ENCODE measurements at regions of chr20 and their contacts with region 1.

Region 1: GRCh38 chr20:37693635-37694626 is at the start of gene CTNNBL1:
- DNase-seq: peak; percentile 97 to 98 (median 98)
- H3K4me3 ChIP-seq: peak within 1 kb of the TSS in 3 of 4 donors; percentile 47 to 91 (median 88)
- H3K27ac ChIP-seq: peak within 1 kb of the TSS in 3 of 5 donors; percentile 16 to 68 (median 43)
- H3K4me1 ChIP-seq: peaks cover 4 to 23% of the 10 kb centered on the region in 2 donors
- H3K27me3 ChIP-seq: no peaks in the 10 kb centered on the region
- CTCF ChIP-seq: peak in 1 of 6 experiments; percentile 12
- POLR2A ChIP-seq: peak; percentile 55 to 66
- total RNA-seq, gene CTNNBL1: 5.5 to 50.7 (median 31.6) TPM

Region 2: GRCh38 chr20:37734228-37734985 is 40.5 kb after region 1 on chr20:
- intact Hi-C with region 1: no loop called
- DNase-seq: no peak
- H3K4me3 ChIP-seq: no peak overlapping the region
- H3K27ac ChIP-seq: peak overlapping the region in 2 of 5 donors; percentile 17 to 20
- H3K4me1 ChIP-seq: peaks cover 0 to 22% of the 10 kb centered on the region in 2 donors
- H3K27me3 ChIP-seq: no peaks in the 10 kb centered on the region
- CTCF ChIP-seq: no peak
- POLR2A ChIP-seq: no peak

Region 3: GRCh38 chr20:37777012-37777950 is 83.3 kb after region 1 on chr20:
- intact Hi-C with region 1: no loop called
- DNase-seq: no peak
- H3K4me3 ChIP-seq: no peak overlapping the region
- H3K27ac ChIP-seq: no peak overlapping the region
- H3K4me1 ChIP-seq: no peaks in the 10 kb centered on the region
- H3K27me3 ChIP-seq: no peaks in the 10 kb centered on the region
- CTCF ChIP-seq: no peak
- POLR2A ChIP-seq: no peak

Region 4: GRCh38 chr20:38033310-38034107 is 339.6 kb after region 1 on chr20 and contains the starts of genes RPRD1B and TTI1:
- intact Hi-C with region 1: loop called in 1 of 2 experiments (anchors 10 kb)
- DNase-seq: peak; percentile 88 to 94 (median 91)
- H3K4me3 ChIP-seq: peak within 1 kb of the TSS; percentile 19 to 98 (median 59)
- H3K27ac ChIP-seq: peak within 1 kb of the TSS; percentile 84 to 98 (median 96)
- H3K4me1 ChIP-seq: peaks cover 32 to 61% of the 10 kb centered on the region in 2 donors
- H3K27me3 ChIP-seq: no peaks in the 10 kb centered on the region
- CTCF ChIP-seq: peak in 2 of 6 experiments; percentile 8 to 13
- POLR2A ChIP-seq: peak; percentile 15 to 74
- total RNA-seq, gene RPRD1B: 16.5 to 36.3 (median 27.3) TPM
- total RNA-seq, gene TTI1: 12.7 to 28.7 (median 22.0) TPM

Region 5: GRCh38 chr20:38325905-38326304 is 632.0 kb after region 1 on chr20:
- intact Hi-C with region 1: no loop called
- DNase-seq: no peak
- H3K4me3 ChIP-seq: no peak overlapping the region
- H3K27ac ChIP-seq: no peak overlapping the region
- H3K4me1 ChIP-seq: no peaks in the 10 kb centered on the region
- H3K27me3 ChIP-seq: no peaks in the 10 kb centered on the region
- CTCF ChIP-seq: no peak
- POLR2A ChIP-seq: no peak

Measured in adrenal gland (tissue), 19 donors.